ENCODE measurements at regions of chr9 and their contacts with region 1.

Region 1: DNA sequence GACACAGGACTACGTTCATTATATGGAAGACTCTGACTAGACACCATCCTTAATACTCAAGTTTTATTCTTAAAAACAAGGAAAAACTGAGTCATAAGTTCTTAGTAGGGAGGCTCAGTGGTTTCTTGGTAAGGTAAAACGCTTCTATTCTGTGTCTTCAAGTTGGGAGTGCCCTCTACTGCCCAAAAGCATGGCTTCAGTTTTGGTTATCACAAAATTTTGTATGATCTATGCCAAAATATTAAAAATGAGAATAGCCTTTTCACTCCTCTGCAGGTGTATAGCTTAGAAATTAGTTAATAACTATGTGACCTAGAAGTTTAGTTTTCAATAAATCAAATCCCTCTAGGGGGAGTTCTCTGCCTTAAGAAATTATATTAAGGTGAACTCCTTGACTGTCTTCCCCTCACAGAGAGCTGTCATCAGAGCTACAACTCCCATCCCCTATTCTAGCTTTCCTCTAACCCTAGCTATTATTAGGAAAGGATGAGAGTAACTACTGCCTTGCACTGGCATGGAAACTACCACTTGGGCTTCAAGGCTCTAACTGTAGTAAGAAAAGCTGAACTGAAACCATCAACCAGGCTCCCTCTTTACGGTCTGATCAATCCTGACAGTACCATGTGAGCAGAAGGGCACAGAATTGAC is 189.7 kb downstream of the GNAQ start:
- DNase-seq: no peak
- H3K4me3 ChIP-seq: no peak overlapping the region
- H3K27ac ChIP-seq: no peak overlapping the region
- H3K4me1 ChIP-seq: peaks cover 24% of the 10 kb centered on the region
- H3K27me3 ChIP-seq: no peaks in the 10 kb centered on the region
- CTCF ChIP-seq: peak; percentile 12 to 42

Region 2: GRCh38 chr9:77488439-77489126 is 353.3 kb before region 1 on chr9:
- CTCF ChIA-PET with region 1: no interaction called
- dilution Hi-C with region 1: no loop called
- in situ Hi-C with region 1: no loop called
- intact Hi-C with region 1: no loop called
- DNase-seq: no peak
- H3K4me3 ChIP-seq: no peak overlapping the region
- H3K27ac ChIP-seq: no peak overlapping the region
- H3K4me1 ChIP-seq: no peaks in the 10 kb centered on the region
- H3K27me3 ChIP-seq: no peaks in the 10 kb centered on the region
- CTCF ChIP-seq: peak; percentile 39 to 64

Region 3: GRCh38 chr9:77825361-77825760 is 16.5 kb before region 1 on chr9:
- CTCF ChIA-PET with region 1: no interaction called
- dilution Hi-C with region 1: no loop called
- in situ Hi-C with region 1: no loop called
- intact Hi-C with region 1: loop called (anchors 2 kb)
- DNase-seq: no peak
- H3K4me3 ChIP-seq: no peak overlapping the region
- H3K27ac ChIP-seq: no peak overlapping the region
- H3K4me1 ChIP-seq: peaks cover 4% of the 10 kb centered on the region
- H3K27me3 ChIP-seq: no peaks in the 10 kb centered on the region
- CTCF ChIP-seq: no peak

Region 4: GRCh38 chr9:77910194-77910621 is 68.3 kb after region 1 on chr9:
- CTCF ChIA-PET with region 1: no interaction called
- dilution Hi-C with region 1: no loop called
- in situ Hi-C with region 1: no loop called
- intact Hi-C with region 1: loop called (anchors 5 kb)
- DNase-seq: no peak
- H3K4me3 ChIP-seq: no peak overlapping the region
- H3K27ac ChIP-seq: no peak overlapping the region
- H3K4me1 ChIP-seq: peaks cover 17% of the 10 kb centered on the region
- H3K27me3 ChIP-seq: no peaks in the 10 kb centered on the region
- CTCF ChIP-seq: no peak

Region 5: GRCh38 chr9:78121488-78121887 is 279.6 kb after region 1 on chr9:
- CTCF ChIA-PET with region 1: no interaction called
- dilution Hi-C with region 1: no loop called
- in situ Hi-C with region 1: no loop called
- intact Hi-C with region 1: loop called (anchors 1 kb)
- DNase-seq: peak; percentile 54
- H3K4me3 ChIP-seq: no peak overlapping the region
- H3K27ac ChIP-seq: no peak overlapping the region
- H3K4me1 ChIP-seq: peaks cover 28% of the 10 kb centered on the region
- H3K27me3 ChIP-seq: no peaks in the 10 kb centered on the region
- CTCF ChIP-seq: peak; percentile 80

Measured in mammary epithelial cell (primary cell).